ENCODE measurements at regions of chr17 and their contacts with region 1.

Region 1: GRCh38 chr17:27805520-27806146 is 5.3 kb upstream of the NOS2 start:
- DNase-seq: peak; percentile 94
- H3K4me3 Mint-ChIP-seq: peak overlapping the region; percentile 60
- H3K27ac Mint-ChIP-seq: peak overlapping the region; percentile 92
- H3K4me1 Mint-ChIP-seq: peaks cover 43% of the 10 kb centered on the region
- H3K27me3 Mint-ChIP-seq: no peaks in the 10 kb centered on the region

Region 2: DNA sequence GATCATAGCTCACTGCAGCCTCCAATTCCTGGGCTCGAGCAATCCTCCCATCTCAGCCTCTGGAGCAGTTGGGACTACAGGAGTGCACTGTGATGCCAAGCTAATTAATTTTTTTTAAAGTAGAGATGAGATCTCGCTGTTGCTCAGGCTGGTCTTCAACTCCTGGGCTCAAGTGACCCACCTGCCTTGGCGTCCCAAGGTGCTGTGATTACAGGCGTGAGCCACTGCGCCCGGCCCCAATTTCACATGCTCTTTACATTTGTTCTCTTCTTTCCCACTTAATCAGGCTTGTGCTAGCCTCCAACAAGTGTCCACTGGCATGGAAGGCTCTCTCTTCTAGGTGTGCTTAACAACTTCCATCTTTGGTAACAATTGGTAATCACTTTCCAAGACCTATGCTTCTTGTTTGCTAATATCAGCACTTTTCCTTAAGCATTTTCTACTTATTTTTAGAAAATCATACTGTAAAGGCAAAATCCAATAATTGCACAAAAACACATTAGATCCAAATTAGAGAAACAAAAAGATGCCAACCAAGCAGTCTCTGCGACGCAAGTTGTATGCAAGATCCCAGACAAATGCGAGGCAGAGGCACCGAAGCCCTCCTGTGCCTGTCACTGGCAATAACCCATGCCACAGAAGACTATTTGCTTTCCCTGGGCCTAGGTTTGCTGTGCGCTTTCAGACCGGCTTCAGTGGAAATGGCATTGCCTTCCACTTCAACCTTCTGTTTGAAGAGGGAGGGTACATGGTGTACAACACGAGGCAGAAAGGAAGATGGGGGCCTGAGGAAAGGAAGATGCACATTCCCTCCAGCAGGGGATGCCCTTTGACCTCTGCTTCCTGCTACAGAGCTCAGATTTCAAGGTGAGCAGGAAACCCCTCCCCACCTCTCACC is 57.9 kb before region 1 on chr17:
- intact Hi-C with region 1: no loop called
- DNase-seq: no peak
- H3K4me3 Mint-ChIP-seq: no peak overlapping the region
- H3K27ac Mint-ChIP-seq: no peak overlapping the region
- H3K4me1 Mint-ChIP-seq: no peaks in the 10 kb centered on the region
- H3K27me3 Mint-ChIP-seq: no peaks in the 10 kb centered on the region

Region 3: GRCh38 chr17:27760069-27760885 is 45.4 kb before region 1 on chr17:
- intact Hi-C with region 1: loop called (anchors 5 kb)
- DNase-seq: peak; percentile 91
- H3K4me3 Mint-ChIP-seq: no peak overlapping the region
- H3K27ac Mint-ChIP-seq: no peak overlapping the region
- H3K4me1 Mint-ChIP-seq: peaks cover 1% of the 10 kb centered on the region
- H3K27me3 Mint-ChIP-seq: no peaks in the 10 kb centered on the region

Region 4: DNA sequence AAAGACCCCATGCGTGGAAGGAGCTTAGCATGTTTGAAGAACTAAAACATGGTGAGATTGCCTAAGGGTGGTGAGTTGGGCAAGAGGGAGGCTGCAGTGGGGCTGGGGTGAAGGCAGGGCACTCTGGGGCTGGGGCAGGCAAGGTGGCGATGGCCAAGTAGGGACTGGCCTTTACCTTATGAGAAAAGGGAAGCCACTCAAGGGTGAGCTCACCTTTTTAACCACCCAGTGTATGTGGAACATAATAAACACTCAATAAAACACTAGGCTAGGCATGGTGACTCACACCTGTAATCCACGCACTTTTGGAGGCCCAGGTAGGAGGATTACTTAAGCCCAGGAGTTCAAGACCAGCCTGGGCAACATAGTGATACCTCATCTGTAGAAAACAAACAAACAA is 49.8 kb after region 1 on chr17:
- intact Hi-C with region 1: loop called (anchors 1 kb)
- DNase-seq: no peak
- H3K4me3 Mint-ChIP-seq: no peak overlapping the region
- H3K27ac Mint-ChIP-seq: no peak overlapping the region
- H3K4me1 Mint-ChIP-seq: peaks cover 16% of the 10 kb centered on the region
- H3K27me3 Mint-ChIP-seq: peaks cover 13% of the 10 kb centered on the region

Region 5: DNA sequence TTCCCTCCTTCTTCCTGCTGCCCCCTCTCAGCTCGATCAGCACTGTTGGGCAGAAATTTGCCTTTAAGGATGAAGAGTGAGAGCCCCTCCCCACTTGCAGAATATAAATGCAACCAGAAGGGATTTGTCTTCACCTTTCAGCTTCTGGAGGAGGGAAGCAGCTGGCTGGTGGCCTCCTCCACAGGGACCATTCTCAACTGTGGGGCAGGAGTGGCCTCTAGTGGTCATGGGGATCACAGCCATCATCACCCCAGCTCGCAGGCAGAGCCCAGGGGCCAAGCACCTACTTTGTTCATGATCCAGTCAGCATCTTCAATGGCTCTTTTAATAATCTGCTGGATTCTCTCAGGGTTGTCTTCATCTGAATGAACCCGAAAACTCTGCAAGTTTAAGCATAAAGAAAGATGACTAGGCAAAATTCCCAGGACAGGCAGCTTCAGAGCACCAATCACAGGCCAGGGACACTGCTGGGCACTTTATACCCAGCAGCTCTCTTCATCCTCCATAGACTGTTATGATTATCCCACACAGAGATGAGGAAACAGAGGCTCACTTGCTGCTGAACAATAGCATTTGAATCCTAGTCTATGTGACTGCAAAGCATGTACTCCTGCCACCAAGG is 74.5 kb after region 1 on chr17:
- intact Hi-C with region 1: loop called (anchors 1 kb)
- DNase-seq: peak; percentile 92
- H3K4me3 Mint-ChIP-seq: no peak overlapping the region
- H3K27ac Mint-ChIP-seq: no peak overlapping the region
- H3K4me1 Mint-ChIP-seq: peaks cover 24% of the 10 kb centered on the region
- H3K27me3 Mint-ChIP-seq: peaks cover 4% of the 10 kb centered on the region

Region 6: GRCh38 chr17:27892866-27893769 is 87.5 kb after region 1 on chr17 and contains the start of gene LYRM9:
- intact Hi-C with region 1: loop called (anchors 1 kb)
- DNase-seq: peak; percentile 99
- H3K4me3 Mint-ChIP-seq: peak within 1 kb of the TSS; percentile 83
- H3K27ac Mint-ChIP-seq: peak within 1 kb of the TSS; percentile 70
- H3K4me1 Mint-ChIP-seq: peaks cover 21% of the 10 kb centered on the region
- H3K27me3 Mint-ChIP-seq: peaks cover 29% of the 10 kb centered on the region
- total RNA-seq, gene LYRM9: 2.4 TPM in 2 replicates

Region 7: DNA sequence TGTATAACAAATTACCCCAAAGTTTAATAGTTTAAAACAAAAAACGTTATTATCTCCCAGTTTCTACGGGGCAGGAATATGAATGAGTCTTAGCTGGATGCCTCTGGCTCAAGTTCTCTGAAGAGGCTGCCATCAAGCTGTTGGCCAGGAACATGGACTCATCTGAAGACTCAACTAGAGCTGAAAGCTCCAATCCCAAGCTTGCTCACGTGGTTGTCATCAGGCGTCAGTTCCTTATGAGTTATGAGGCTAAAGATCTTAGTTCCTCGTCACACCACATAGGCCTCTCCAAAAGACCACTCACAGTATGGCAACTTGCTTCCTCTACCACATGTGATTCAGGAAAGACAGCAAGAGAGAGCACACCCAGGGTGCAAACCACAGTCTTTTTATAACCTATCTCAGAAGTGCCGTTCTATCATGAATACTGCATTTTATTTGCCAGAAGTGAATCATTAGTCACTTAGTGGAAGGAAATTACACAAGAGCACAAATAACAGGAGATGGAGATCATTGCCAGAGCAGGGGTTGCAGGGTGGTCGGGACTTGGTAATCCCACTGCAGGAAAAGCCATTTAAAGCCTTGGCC is 188.2 kb after region 1 on chr17:
- intact Hi-C with region 1: no loop called
- DNase-seq: no peak
- H3K4me3 Mint-ChIP-seq: no peak overlapping the region
- H3K27ac Mint-ChIP-seq: no peak overlapping the region
- H3K4me1 Mint-ChIP-seq: no peaks in the 10 kb centered on the region
- H3K27me3 Mint-ChIP-seq: peaks cover 15% of the 10 kb centered on the region

Region 8: GRCh38 chr17:28252436-28252835 is 446.8 kb after region 1 on chr17:
- intact Hi-C with region 1: loop called (anchors 1 kb)
- DNase-seq: no peak
- H3K4me3 Mint-ChIP-seq: no peak overlapping the region
- H3K27ac Mint-ChIP-seq: no peak overlapping the region
- H3K4me1 Mint-ChIP-seq: peaks cover 4% of the 10 kb centered on the region
- H3K27me3 Mint-ChIP-seq: peaks cover 13% of the 10 kb centered on the region

Region 9: GRCh38 chr17:28318759-28319660 is 513.4 kb after region 1 on chr17 and contains the start of gene TMEM97:
- intact Hi-C with region 1: loop called (anchors 5 kb)
- DNase-seq: peak; percentile 99
- H3K4me3 Mint-ChIP-seq: peak within 1 kb of the TSS; percentile 97
- H3K27ac Mint-ChIP-seq: peak within 1 kb of the TSS; percentile 96
- H3K4me1 Mint-ChIP-seq: peaks cover 34% of the 10 kb centered on the region
- H3K27me3 Mint-ChIP-seq: peaks cover 2% of the 10 kb centered on the region
- total RNA-seq, gene TMEM97: 64.6 and 69.0 TPM in 2 replicates

Measured in activated CD4-positive, alpha-beta T cell treated with anti-CD3 and anti-CD28 coated beads, Interleukin-2, amount 10 ng/mL, durations not matched to agents 24 days and 14 days (primary cell).